Esophagus muscularis mucosa (tissue), 4 donors: ENCODE measurements at regions of chr22 and their contacts with region 1.

Region 1: DNA sequence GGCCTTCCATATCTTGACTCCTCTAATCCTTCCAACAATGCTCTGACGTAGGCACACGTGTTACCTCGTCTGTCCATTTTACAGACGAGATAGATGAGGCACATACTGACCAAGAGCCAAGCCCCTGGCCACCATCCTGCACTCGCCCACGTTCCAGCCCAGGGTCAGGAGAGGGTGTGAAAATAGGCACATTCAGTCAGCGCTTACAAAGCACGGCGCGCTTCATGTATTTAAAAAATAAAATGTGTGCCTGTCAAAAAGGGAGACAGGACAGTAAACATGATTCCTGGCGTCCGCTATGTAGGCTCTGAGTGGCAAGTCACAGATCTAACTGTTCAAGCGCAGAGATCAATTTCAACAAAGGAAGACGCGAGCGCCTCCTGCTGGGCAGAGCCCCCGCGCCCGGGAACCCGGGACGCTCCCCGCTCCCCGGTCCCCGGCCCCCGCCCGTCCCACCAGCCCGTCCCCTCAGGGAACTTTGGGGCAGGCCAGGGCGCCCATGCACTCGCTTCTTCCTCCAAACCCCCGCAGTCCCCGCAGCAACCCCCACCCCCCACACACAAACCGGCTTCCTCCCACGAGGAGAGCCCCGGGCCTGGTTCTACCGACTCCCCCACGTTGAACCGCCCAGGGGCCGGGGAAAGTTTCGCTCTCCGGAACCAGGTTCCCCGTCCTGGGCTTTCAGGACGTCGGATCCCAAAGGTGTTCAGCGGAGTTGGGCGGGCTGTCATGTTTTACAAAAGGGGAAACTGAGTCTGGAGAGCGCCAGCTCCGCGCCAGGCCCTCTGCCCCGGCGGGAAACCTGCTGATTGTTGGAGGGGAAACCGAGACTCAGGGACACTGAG is 10.4 kb upstream of the C1QTNF6 start:
- DNase-seq: no peak
- H3K4me3 ChIP-seq: peak overlapping the region; percentile 74 to 82 (median 76)
- H3K27ac ChIP-seq: peak overlapping the region; percentile 97 to 98 (median 97)
- H3K4me1 ChIP-seq: peaks cover 40 to 46% (median 45%) of the 10 kb centered on the region in 4 donors
- H3K27me3 ChIP-seq: no peaks in the 10 kb centered on the region
- CTCF ChIP-seq: peak; percentile 66 to 93 (median 93)
- EP300 ChIP-seq: no peak
- POLR2A ChIP-seq: no peak

Region 2: DNA sequence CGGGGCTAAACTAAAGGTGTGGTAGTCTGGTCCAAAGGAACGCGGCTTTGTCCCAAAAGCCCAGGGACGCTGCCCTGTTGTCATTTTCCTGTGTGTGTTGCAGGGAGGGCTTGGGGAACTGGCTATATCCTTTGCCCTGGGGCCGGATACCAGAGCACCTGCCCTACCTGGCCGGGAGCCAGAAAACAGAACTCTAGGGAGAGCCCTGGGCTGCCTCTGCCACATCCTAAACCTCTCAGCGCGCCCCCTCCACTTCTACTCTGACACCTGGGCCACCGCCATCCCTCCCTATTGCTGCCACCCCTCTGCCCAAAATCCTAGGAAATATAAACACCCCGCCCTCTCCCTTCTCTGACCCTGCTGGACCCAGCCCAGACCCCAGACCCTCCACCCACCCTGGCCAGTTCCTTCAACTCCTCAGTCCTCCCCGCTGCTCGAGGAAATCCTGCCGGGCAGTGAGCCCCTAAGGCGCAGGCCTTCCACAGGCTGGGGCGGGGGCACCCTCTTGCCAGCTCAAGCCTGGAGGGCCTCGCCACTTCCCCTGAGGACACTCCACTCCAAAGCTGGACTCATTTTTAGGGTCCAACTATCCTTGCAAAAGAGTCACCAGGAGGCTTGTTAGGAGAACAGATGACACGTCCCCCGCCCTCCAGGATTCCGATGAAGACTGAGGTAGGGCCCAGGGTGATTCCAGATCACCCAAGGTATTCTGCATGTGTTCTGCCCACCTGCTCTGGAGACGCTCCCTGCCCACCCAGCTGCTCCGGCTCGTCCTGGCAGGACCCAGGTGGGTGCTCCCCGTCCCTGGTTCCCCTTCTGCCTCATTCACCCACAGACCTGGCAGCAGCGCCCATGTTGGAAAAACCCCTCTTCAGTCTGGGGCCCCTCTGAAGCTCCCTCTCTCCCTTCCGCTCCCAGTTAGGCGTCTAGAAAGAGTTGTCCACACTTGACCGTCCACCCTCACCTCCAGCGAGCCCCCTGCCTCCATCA is 134.8 kb before region 1 on chr22:
- intact Hi-C with region 1: no loop called
- DNase-seq: no peak
- H3K4me3 ChIP-seq: no peak overlapping the region
- H3K27ac ChIP-seq: no peak overlapping the region
- H3K4me1 ChIP-seq: peaks cover 0 to 1% (median 0%) of the 10 kb centered on the region in 4 donors
- H3K27me3 ChIP-seq: peaks cover 0 to 33% (median 12%) of the 10 kb centered on the region in 4 donors
- CTCF ChIP-seq: no peak
- EP300 ChIP-seq: no peak
- POLR2A ChIP-seq: no peak

Region 3: GRCh38 chr22:37077884-37078485 is 120.5 kb before region 1 on chr22:
- intact Hi-C with region 1: loop called (anchors 10 kb)
- DNase-seq: no peak
- H3K4me3 ChIP-seq: no peak overlapping the region
- H3K27ac ChIP-seq: no peak overlapping the region
- H3K4me1 ChIP-seq: no peaks in the 10 kb centered on the region
- H3K27me3 ChIP-seq: peaks cover 0 to 67% (median 0%) of the 10 kb centered on the region in 4 donors
- CTCF ChIP-seq: peak; percentile 62 to 92 (median 71)
- EP300 ChIP-seq: no peak
- POLR2A ChIP-seq: no peak

Region 4: DNA sequence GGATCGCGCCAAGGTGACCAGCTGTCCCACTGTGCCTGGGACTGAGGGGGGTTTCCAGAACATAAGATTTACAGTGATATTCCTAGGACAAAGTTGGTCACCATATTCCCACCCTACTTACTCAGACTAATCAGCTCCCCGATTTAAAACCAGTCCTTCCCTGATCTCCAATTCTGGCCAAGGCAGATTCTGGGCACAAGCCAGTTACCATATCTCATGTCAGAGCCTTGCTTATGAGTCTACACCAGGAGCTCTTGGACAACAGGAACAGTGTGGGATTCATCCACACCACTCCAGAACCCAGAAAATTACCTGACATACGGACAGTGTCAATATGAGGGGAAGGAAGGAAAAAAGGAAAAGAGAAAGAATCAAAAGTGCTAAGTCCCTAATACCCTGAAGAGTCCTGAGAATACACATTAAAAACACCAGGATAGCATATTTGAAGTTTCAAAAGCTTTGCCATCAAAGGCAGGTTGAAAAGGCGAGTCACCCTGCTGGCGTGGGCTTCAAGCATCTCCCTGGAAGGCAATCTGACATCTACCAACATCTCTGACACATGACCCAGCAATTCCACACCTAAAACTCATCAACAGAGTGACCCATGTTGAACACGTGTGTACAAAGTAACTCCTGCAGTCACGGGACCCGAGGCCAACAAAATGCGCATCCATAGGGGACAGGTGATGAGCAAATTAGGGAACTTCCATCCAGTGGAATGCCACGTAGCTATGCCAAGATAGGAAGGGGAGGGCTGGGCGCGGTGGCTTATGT is 40.8 kb before region 1 on chr22:
- intact Hi-C with region 1: loop called (anchors 2 kb)
- DNase-seq: no peak
- H3K4me3 ChIP-seq: no peak overlapping the region
- H3K27ac ChIP-seq: no peak overlapping the region
- H3K4me1 ChIP-seq: no peaks in the 10 kb centered on the region
- H3K27me3 ChIP-seq: peaks cover 0 to 56% (median 2%) of the 10 kb centered on the region in 4 donors
- CTCF ChIP-seq: no peak
- EP300 ChIP-seq: no peak
- POLR2A ChIP-seq: no peak

Region 5: GRCh38 chr22:37166675-37167066 is 31.8 kb before region 1 on chr22:
- intact Hi-C with region 1: loop called (anchors 1 kb)
- DNase-seq: peak; percentile 96
- H3K4me3 ChIP-seq: peak overlapping the region in 3 of 4 donors; percentile 5 to 32 (median 17)
- H3K27ac ChIP-seq: peak overlapping the region in 1 of 4 donors; percentile 26
- H3K4me1 ChIP-seq: peaks cover 15 to 27% (median 21%) of the 10 kb centered on the region in 4 donors
- H3K27me3 ChIP-seq: peaks cover 0 to 15% (median 2%) of the 10 kb centered on the region in 4 donors
- CTCF ChIP-seq: peak; percentile 91 to 94 (median 94)
- EP300 ChIP-seq: no peak
- POLR2A ChIP-seq: no peak